Caco-2 (cell line): ENCODE measurements at regions of chr1 and their contacts with region 1.

Region 1: DNA sequence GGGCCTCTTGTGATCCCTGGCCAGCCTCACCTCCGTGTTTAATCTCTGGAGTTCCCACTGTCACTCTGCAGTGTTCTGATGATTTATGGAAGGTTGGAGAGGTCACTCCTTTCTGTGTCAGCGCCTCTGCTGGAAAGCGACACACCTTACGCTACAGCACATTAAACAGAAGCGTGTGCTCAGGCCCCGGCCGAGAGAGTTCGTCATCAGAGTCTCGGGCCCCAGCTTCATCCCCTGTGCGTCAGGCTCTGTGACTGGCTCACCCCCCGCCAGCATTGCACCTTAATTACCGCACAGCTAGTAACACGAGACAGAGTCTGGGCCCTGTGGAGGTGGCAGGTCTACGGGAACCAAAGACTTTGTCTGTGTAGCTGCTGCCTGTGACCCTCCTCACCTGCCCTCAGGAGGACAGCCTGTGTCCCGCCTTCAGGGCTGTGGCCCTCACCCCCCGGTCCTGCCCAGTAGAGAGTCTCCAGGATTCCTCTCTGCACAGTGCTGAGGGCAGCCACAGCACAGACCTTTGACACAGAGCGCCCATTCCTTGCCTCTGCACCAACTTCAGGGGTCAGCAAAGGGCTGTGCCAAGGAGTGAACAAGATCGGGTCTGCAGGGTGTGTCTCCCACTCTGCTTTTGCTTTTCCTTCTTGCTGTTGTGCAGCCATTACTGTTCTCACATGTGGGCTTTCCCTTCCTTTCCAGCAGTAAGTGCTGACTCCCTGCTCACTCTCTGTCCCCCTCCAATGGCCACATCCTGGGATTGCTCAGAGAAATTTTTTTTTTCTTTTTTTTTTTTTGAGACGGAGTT is 157.6 kb downstream of the PGBD5 start:
- DNase-seq: peak; percentile 64 to 67
- H3K4me3 ChIP-seq: no peak overlapping the region
- H3K4me3 Mint-ChIP-seq: no peak overlapping the region
- H3K27ac Mint-ChIP-seq: peak overlapping the region; percentile 66
- H3K4me1 ChIP-seq: peaks cover 13% of the 10 kb centered on the region; the same call in 1 of the 2 replicates
- H3K4me1 Mint-ChIP-seq: peaks cover 16% of the 10 kb centered on the region
- H3K27me3 ChIP-seq: no peaks in the 10 kb centered on the region
- H3K27me3 Mint-ChIP-seq: no peaks in the 10 kb centered on the region
- CTCF ChIP-seq: peak; percentile 53 to 71

Region 2: GRCh38 chr1:230248016-230248888 is 20.3 kb before region 1 on chr1:
- CTCF ChIA-PET with region 1: interaction called, 4 read pairs
- POLR2A ChIA-PET with region 1: no interaction called
- intact Hi-C with region 1: loop called (anchors 1 kb)
- DNase-seq: peak; percentile 79 to 81
- H3K4me3 ChIP-seq: no peak overlapping the region
- H3K4me3 Mint-ChIP-seq: peak overlapping the region; percentile 6
- H3K27ac Mint-ChIP-seq: no peak overlapping the region
- H3K4me1 ChIP-seq: peaks cover 18% of the 10 kb centered on the region
- H3K4me1 Mint-ChIP-seq: peaks cover 24% of the 10 kb centered on the region
- H3K27me3 ChIP-seq: no peaks in the 10 kb centered on the region
- H3K27me3 Mint-ChIP-seq: no peaks in the 10 kb centered on the region
- CTCF ChIP-seq: no peak

Region 3: GRCh38 chr1:230282157-230282556 is 13.6 kb after region 1 on chr1:
- CTCF ChIA-PET with region 1: no interaction called
- POLR2A ChIA-PET with region 1: no interaction called
- intact Hi-C with region 1: no loop called
- DNase-seq: no peak
- H3K4me3 ChIP-seq: no peak overlapping the region
- H3K4me3 Mint-ChIP-seq: no peak overlapping the region
- H3K27ac Mint-ChIP-seq: no peak overlapping the region
- H3K4me1 ChIP-seq: no peaks in the 10 kb centered on the region
- H3K4me1 Mint-ChIP-seq: no peaks in the 10 kb centered on the region
- H3K27me3 ChIP-seq: no peaks in the 10 kb centered on the region
- H3K27me3 Mint-ChIP-seq: no peaks in the 10 kb centered on the region
- CTCF ChIP-seq: no peak